Sciatic nerve (tissue), 2 donors: ENCODE measurements at regions of chr2 and their contacts with region 1.

Region 1: GRCh38 chr2:34153484-34153883 is 554.4 kb upstream of the FAM98A start:
- DNase-seq: no peak
- ATAC-seq: no peak

Region 2: DNA sequence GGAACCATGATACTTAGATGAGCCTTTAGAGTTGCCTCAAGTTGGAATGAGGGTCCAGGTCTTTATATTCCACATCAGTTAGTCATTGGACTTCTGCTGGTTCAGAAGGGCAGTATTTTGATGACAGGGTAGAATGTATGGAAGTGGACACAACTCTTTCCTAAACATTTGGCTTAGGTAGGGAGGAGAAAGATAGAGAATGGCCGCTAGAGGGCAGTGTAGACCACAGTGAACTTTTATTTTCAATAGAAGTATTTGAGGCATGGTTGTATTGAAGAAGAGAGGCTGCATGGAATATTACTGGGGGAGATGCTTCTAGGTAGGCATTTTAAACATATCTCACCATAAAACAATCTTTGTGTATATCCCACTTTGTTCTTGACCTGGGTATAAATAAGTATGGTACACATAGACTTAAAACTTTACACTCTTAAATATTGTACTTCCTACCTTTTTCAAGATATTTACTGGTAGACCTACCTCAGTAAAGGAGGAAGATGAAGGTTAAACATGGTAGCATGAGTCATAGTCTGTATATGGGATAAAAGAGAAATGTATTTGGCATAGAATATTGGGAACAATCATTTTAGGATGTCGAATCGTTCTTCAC is 56.8 kb before region 1 on chr2:
- intact Hi-C with region 1: no loop called
- DNase-seq: peak; percentile 60
- ATAC-seq: peak; percentile 49

Region 3: GRCh38 chr2:34269985-34270384 is 116.5 kb after region 1 on chr2:
- intact Hi-C with region 1: loop called (anchors 5 kb)
- DNase-seq: no peak
- ATAC-seq: no peak

Region 4: GRCh38 chr2:34419856-34420255 is 266.4 kb after region 1 on chr2:
- intact Hi-C with region 1: no loop called
- DNase-seq: no peak
- ATAC-seq: no peak